ENCODE measurements at regions of chr13 and their contacts with region 1.

Region 1: GRCh38 chr13:94435604-94436226 is 43.8 kb downstream of the DCT start:
- DNase-seq: no peak
- ATAC-seq: peak; percentile 48 to 72

Region 2: GRCh38 chr13:94537740-94538630 is 102.3 kb after region 1 on chr13:
- intact Hi-C with region 1: no loop called
- DNase-seq: no peak
- ATAC-seq: no peak

Region 3: GRCh38 chr13:94617389-94618000 is 181.8 kb after region 1 on chr13:
- intact Hi-C with region 1: loop called (anchors 1 to 5 kb)
- DNase-seq: no peak
- ATAC-seq: peak in 1 of 2 donors; percentile 65